GM12878 (cell line): ENCODE measurements at regions of chr9 and their contacts with region 1.

Region 1: GRCh38 chr9:69066955-69067354 is 31.4 kb downstream of the FXN start:
- DNase-seq: no peak
- ATAC-seq: no peak
- H3K4me3 ChIP-seq: no peak overlapping the region
- H3K27ac ChIP-seq: no peak overlapping the region
- H3K4me1 ChIP-seq: no peaks in the 10 kb centered on the region
- H3K27me3 ChIP-seq: no peaks in the 10 kb centered on the region
- CTCF ChIP-seq: no peak
- EP300 ChIP-seq: no peak
- POLR2A ChIP-seq: no peak
- RAD21 ChIP-seq: no peak

Region 2: GRCh38 chr9:69945671-69946141 is 878.8 kb after region 1 on chr9:
- CTCF ChIA-PET with region 1: no interaction called
- POLR2A ChIA-PET with region 1: no interaction called
- RAD21 ChIA-PET with region 1: no interaction called
- SMC1A ChIA-PET with region 1: no interaction called
- in situ Hi-C with region 1: loop called (anchors 25 kb)
- intact Hi-C with region 1: no loop called
- DNase-seq: no peak
- ATAC-seq: no peak
- H3K4me3 ChIP-seq: no peak overlapping the region
- H3K27ac ChIP-seq: no peak overlapping the region
- H3K4me1 ChIP-seq: no peaks in the 10 kb centered on the region
- H3K27me3 ChIP-seq: no peaks in the 10 kb centered on the region
- CTCF ChIP-seq: no peak
- EP300 ChIP-seq: no peak
- POLR2A ChIP-seq: no peak
- RAD21 ChIP-seq: no peak